ENCODE measurements at regions of chr14 and their contacts with region 1.

Region 1: DNA sequence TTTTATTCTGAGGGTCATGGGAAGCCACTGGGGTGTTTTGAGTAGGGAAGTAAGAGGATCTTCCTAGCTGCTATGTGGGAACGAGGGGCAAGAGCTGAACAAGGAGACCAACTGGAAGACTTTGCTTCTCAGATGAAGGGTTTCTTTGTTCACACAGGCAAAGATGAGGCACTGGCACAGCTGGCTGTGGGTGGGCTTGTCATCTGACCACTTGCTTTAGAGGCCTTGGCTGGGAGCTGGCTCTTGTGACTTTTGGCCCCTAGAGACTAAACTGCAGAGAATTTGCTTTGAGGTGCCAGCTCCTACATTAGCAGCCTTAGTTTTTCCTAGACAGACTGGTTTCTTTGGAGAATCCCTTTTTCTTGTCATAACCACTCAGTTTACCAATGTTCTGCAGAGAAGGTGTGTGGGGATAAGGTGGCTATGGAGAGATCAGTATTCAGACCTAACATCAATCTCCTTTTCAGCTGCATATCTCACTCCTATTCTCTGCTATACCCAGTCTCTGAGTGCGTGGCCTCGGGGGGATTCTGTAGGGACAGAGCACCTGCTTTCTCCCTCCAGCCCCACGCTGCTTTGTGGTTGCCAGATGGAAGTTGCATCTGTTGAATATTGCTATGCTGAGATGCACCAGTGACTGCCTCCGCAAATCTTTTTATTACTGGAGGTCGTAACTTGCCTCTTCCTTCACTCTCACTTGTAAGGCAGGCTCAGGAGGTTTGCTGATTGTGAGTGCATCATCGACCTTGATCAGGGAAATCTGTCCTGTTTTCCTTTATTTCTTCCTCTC is 12.7 kb downstream of the PPP2R5C start:
- DNase-seq: no peak
- ATAC-seq: no peak
- H3K4me3 ChIP-seq: no peak overlapping the region
- H3K4me3 Mint-ChIP-seq: no peak overlapping the region
- H3K27ac ChIP-seq: no peak overlapping the region
- H3K27ac Mint-ChIP-seq: no peak overlapping the region
- H3K4me1 ChIP-seq: peaks cover 11% of the 10 kb centered on the region
- H3K4me1 Mint-ChIP-seq: peaks cover 45% of the 10 kb centered on the region
- H3K27me3 ChIP-seq: no peaks in the 10 kb centered on the region
- H3K27me3 Mint-ChIP-seq: no peaks in the 10 kb centered on the region
- CTCF ChIP-seq: no peak

Region 2: DNA sequence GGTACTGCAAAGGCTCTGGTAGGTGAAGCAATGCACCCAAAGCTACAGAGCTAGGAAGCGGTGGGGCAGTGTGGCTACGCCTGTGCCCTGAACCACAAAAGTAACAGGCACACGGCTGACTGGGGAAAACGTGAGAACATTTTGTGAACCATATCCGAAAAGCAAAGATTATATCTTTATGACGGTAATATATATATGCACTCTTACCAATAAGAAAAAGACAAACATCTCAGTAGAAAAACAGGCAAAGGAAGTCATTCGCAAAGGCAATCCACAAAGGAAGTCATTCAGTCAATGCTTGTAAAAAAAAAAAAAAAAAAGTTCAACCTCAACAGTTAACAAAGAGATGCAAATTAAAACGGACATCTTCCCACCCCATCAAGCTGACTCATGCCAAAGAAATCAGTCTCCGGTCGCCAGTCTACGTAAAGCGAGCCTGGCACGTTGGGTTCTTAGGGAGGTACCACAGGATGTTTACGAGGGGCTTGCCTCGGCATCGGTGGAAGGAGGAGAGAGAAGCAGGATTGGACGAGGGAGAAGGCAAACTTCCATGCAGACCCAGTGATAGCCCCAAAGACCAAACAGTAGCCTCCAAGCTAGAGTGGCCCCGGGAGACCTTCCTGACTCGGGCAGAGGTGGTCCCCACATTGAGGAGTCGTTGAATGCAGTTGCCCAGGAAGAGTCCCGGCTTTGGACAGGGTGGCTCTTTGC is 52.1 kb before region 1 on chr14:
- CTCF ChIA-PET with region 1: interaction called, 16 read pairs
- POLR2A ChIA-PET with region 1: interaction called, 5 read pairs
- intact Hi-C with region 1: no loop called
- DNase-seq: peak; percentile 65 to 95 (median 77)
- ATAC-seq: peak; percentile 77
- H3K4me3 ChIP-seq: peak overlapping the region; percentile 31
- H3K4me3 Mint-ChIP-seq: peak overlapping the region; percentile 70
- H3K27ac ChIP-seq: peak overlapping the region; percentile 84 to 87
- H3K27ac Mint-ChIP-seq: peak overlapping the region; percentile 95
- H3K4me1 ChIP-seq: peaks cover 61% of the 10 kb centered on the region
- H3K4me1 Mint-ChIP-seq: peaks cover 61% of the 10 kb centered on the region
- H3K27me3 ChIP-seq: no peaks in the 10 kb centered on the region
- H3K27me3 Mint-ChIP-seq: no peaks in the 10 kb centered on the region
- CTCF ChIP-seq: no peak

Region 3: GRCh38 chr14:101791919-101792572 is 17.8 kb after region 1 on chr14:
- CTCF ChIA-PET with region 1: interaction called, 10 read pairs
- POLR2A ChIA-PET with region 1: interaction called, 6 read pairs
- intact Hi-C with region 1: no loop called
- DNase-seq: peak in 3 of 14 experiments; percentile 56 to 72 (median 64)
- ATAC-seq: peak; percentile 84
- H3K4me3 ChIP-seq: peak overlapping the region; percentile 40
- H3K4me3 Mint-ChIP-seq: peak overlapping the region; percentile 84
- H3K27ac ChIP-seq: peak overlapping the region in 1 of 2 donors; percentile 60
- H3K27ac Mint-ChIP-seq: peak overlapping the region; percentile 76
- H3K4me1 ChIP-seq: peaks cover 12% of the 10 kb centered on the region
- H3K4me1 Mint-ChIP-seq: peaks cover 36% of the 10 kb centered on the region
- H3K27me3 ChIP-seq: no peaks in the 10 kb centered on the region
- H3K27me3 Mint-ChIP-seq: no peaks in the 10 kb centered on the region
- CTCF ChIP-seq: no peak

Region 4: DNA sequence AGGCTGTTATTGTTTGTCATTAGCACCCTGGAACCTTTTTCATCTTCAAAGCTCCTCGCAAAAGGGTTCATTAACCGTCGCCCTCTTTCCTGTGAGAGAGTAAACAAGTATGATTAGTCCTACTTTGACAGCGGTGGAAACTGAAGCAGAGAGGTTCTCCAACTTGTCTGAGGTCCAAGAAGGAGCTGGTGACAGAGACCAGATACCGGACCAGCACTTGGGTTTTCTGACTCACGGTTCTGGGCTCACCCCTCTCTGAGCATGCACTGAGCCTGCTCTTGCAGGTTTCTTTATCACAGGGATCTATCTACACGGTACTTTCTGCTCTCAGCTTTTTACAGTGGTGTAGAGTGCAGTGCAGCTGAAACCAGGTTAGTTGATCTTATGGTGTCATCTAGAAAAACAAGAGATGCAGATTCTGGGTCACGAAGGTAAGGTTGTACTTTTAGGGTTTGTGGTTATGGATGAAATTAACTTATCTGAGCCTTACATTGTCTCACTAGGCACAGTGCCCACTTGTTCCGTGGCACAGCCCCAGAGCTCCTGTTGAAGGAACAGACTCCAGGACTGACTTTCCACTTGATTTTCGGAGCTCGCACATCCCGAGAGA is 49.4 kb after region 1 on chr14:
- CTCF ChIA-PET with region 1: interaction called, 29 read pairs
- POLR2A ChIA-PET with region 1: interaction called, 73 read pairs
- intact Hi-C with region 1: loop called (anchors 2 to 5 kb)
- DNase-seq: peak; percentile 50 to 91 (median 66)
- ATAC-seq: peak; percentile 61
- H3K4me3 ChIP-seq: peak overlapping the region; percentile 76
- H3K4me3 Mint-ChIP-seq: peak overlapping the region; percentile 90
- H3K27ac ChIP-seq: peak overlapping the region; percentile 98 to 99
- H3K27ac Mint-ChIP-seq: peak overlapping the region; percentile 98
- H3K4me1 ChIP-seq: peaks cover 79% of the 10 kb centered on the region
- H3K4me1 Mint-ChIP-seq: peaks cover 89% of the 10 kb centered on the region
- H3K27me3 ChIP-seq: no peaks in the 10 kb centered on the region
- H3K27me3 Mint-ChIP-seq: no peaks in the 10 kb centered on the region
- CTCF ChIP-seq: no peak

Region 5: GRCh38 chr14:101843665-101844064 is 69.5 kb after region 1 on chr14:
- CTCF ChIA-PET with region 1: interaction called, 43 read pairs
- POLR2A ChIA-PET with region 1: interaction called, 14 read pairs
- intact Hi-C with region 1: loop called (anchors 1 to 2 kb)
- DNase-seq: peak in 12 of 14 experiments; percentile 29 to 88 (median 50)
- ATAC-seq: peak; percentile 79
- H3K4me3 ChIP-seq: no peak overlapping the region
- H3K4me3 Mint-ChIP-seq: peak overlapping the region; percentile 26
- H3K27ac ChIP-seq: peak overlapping the region in 1 of 2 donors; percentile 48
- H3K27ac Mint-ChIP-seq: peak overlapping the region; percentile 78
- H3K4me1 ChIP-seq: peaks cover 88% of the 10 kb centered on the region
- H3K4me1 Mint-ChIP-seq: peaks cover 87% of the 10 kb centered on the region
- H3K27me3 ChIP-seq: no peaks in the 10 kb centered on the region
- H3K27me3 Mint-ChIP-seq: no peaks in the 10 kb centered on the region
- CTCF ChIP-seq: peak; percentile 69

Region 6: GRCh38 chr14:101854366-101854765 is 80.2 kb after region 1 on chr14:
- CTCF ChIA-PET with region 1: interaction called, 17 read pairs
- POLR2A ChIA-PET with region 1: interaction called, 13 read pairs
- intact Hi-C with region 1: no loop called
- DNase-seq: peak in 5 of 14 experiments; percentile 24 to 62 (median 59)
- ATAC-seq: peak; percentile 87
- H3K4me3 ChIP-seq: no peak overlapping the region
- H3K4me3 Mint-ChIP-seq: peak overlapping the region; percentile 7
- H3K27ac ChIP-seq: peak overlapping the region in 1 of 2 donors; percentile 10
- H3K27ac Mint-ChIP-seq: peak overlapping the region; percentile 73
- H3K4me1 ChIP-seq: peaks cover 63% of the 10 kb centered on the region
- H3K4me1 Mint-ChIP-seq: peaks cover 93% of the 10 kb centered on the region
- H3K27me3 ChIP-seq: no peaks in the 10 kb centered on the region
- H3K27me3 Mint-ChIP-seq: no peaks in the 10 kb centered on the region
- CTCF ChIP-seq: no peak

Region 7: GRCh38 chr14:101889898-101890297 is 115.7 kb after region 1 on chr14:
- CTCF ChIA-PET with region 1: interaction called, 12 read pairs
- POLR2A ChIA-PET with region 1: no interaction called
- intact Hi-C with region 1: loop called in 1 of 2 experiments (anchors 1 kb)
- DNase-seq: peak in 3 of 14 experiments; percentile 15 to 49 (median 35)
- ATAC-seq: peak; percentile 52
- H3K4me3 ChIP-seq: no peak overlapping the region
- H3K4me3 Mint-ChIP-seq: no peak overlapping the region
- H3K27ac ChIP-seq: no peak overlapping the region
- H3K27ac Mint-ChIP-seq: peak overlapping the region; percentile 31
- H3K4me1 ChIP-seq: no peaks in the 10 kb centered on the region
- H3K4me1 Mint-ChIP-seq: no peaks in the 10 kb centered on the region
- H3K27me3 ChIP-seq: no peaks in the 10 kb centered on the region
- H3K27me3 Mint-ChIP-seq: no peaks in the 10 kb centered on the region
- CTCF ChIP-seq: no peak

Measured in CD4-positive, alpha-beta T cell (primary cell).